Ascending aorta (tissue), 2 donors: ENCODE measurements at regions of chr17 and their contacts with region 1.

Region 1: GRCh38 chr17:76397687-76398487 is 13.5 kb downstream of the SPHK1 start:
- DNase-seq: peak; percentile 43 to 94
- H3K4me3 ChIP-seq: no peak overlapping the region
- H3K27ac ChIP-seq: no peak overlapping the region
- H3K4me1 ChIP-seq: no peaks in the 10 kb centered on the region
- H3K27me3 ChIP-seq: no peaks in the 10 kb centered on the region
- CTCF ChIP-seq: peak; percentile 97 to 99 (median 98)

Region 2: GRCh38 chr17:76171706-76172105 is 226.2 kb before region 1 on chr17:
- intact Hi-C with region 1: no loop called
- DNase-seq: no peak
- H3K4me3 ChIP-seq: no peak overlapping the region
- H3K27ac ChIP-seq: no peak overlapping the region
- H3K4me1 ChIP-seq: no peaks in the 10 kb centered on the region
- H3K27me3 ChIP-seq: no peaks in the 10 kb centered on the region
- CTCF ChIP-seq: no peak

Region 3: GRCh38 chr17:76304226-76305134 is 93.4 kb before region 1 on chr17:
- intact Hi-C with region 1: loop called (anchors 1 kb)
- DNase-seq: no peak
- H3K4me3 ChIP-seq: no peak overlapping the region
- H3K27ac ChIP-seq: no peak overlapping the region
- H3K4me1 ChIP-seq: no peaks in the 10 kb centered on the region
- H3K27me3 ChIP-seq: no peaks in the 10 kb centered on the region
- CTCF ChIP-seq: no peak